ENCODE measurements at regions of chr2 and their contacts with region 1.

Region 1: GRCh38 chr2:217331523-217332139 is 471.8 kb upstream of the TNP1 start:
- DNase-seq: peak; percentile 83
- H3K4me3 Mint-ChIP-seq: peak overlapping the region; percentile 24
- H3K27ac Mint-ChIP-seq: peak overlapping the region; percentile 97
- H3K4me1 Mint-ChIP-seq: peaks cover 84% of the 10 kb centered on the region
- H3K27me3 Mint-ChIP-seq: no peaks in the 10 kb centered on the region
- CTCF ChIP-seq: no peak

Region 2: DNA sequence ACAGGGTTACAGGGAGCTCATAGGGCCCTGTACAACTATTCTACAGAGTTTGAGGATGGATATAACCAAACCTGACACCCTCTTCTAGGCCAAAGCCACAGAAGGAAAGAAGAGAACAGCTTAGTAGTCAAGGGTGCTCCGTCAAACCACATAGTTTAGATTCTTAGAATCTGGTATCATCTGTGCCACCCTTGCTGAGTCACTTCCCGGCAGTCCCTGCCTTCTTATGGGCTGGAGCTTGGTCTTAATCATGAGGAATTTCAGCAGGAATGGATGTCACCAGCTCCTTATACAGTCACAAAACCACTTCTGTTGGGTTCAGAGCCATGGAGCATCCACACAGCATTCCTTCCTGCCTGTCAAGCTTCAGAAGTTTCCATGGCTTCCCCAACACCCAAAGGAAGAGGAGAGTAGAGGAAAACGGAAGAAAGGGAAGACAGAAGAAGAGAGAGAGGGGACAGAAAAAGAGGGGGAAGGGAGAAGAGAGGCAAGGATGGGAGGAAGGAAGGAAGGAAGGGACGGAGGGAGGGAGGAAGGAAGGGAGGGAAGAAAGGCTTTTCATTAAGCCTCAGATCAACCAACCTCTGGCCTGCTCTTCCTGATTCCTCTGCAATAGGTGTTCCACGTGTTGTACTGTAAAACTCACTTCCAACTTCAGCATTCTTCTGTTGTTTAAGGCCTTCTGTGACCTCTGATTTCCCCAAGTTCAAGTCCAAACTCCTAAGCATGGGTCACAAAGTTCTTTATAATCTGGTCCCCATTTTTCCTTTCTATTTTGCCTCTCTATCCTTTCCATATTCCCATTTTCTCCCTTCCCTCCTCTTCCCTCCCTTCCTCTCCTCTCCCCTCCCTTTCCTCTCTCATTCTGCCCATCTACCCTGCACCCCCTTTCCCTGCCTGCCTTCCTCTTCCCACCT is 225.6 kb before region 1 on chr2:
- CTCF ChIA-PET with region 1: interaction called, 5 read pairs
- intact Hi-C with region 1: loop called (anchors 2 kb)
- DNase-seq: peak; percentile 66
- H3K4me3 Mint-ChIP-seq: no peak overlapping the region
- H3K27ac Mint-ChIP-seq: peak overlapping the region; percentile 90
- H3K4me1 Mint-ChIP-seq: peaks cover 65% of the 10 kb centered on the region
- H3K27me3 Mint-ChIP-seq: no peaks in the 10 kb centered on the region
- CTCF ChIP-seq: no peak

Region 3: DNA sequence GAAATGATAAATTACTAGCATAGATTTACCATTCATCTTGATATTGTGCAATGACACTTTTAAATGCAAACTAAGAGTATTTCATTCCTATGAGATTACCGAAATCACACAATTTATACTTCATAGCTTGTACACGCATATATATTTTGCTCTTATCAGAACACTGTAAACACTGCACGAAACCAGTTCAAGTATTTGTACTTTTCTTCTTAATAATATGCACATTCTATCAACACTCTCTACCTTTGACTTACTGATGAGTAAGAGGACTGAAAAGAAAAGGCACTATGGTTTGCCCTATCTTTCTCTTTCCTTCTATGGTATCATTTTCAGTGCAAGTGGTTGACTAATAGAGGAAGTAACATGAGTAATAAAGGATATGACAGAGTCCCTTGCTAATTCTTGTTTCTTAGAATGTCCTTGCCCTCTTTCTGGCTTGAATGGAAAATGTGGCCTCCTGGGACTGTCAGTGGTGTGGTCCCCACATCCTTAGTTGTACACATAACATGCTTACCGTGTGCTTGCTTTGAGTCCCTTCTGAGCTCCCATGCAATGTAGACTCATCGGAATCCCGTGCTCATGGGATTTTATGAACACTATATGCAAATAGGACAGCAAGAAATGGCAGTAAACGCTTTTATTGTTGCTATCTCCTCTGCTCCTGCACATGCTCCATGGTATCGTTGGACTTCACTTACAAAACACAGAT is 108.3 kb before region 1 on chr2:
- CTCF ChIA-PET with region 1: interaction called, 3 read pairs
- intact Hi-C with region 1: loop called (anchors 1 kb)
- DNase-seq: peak; percentile 56
- H3K4me3 Mint-ChIP-seq: no peak overlapping the region
- H3K27ac Mint-ChIP-seq: peak overlapping the region; percentile 86
- H3K4me1 Mint-ChIP-seq: peaks cover 42% of the 10 kb centered on the region
- H3K27me3 Mint-ChIP-seq: no peaks in the 10 kb centered on the region
- CTCF ChIP-seq: no peak

Region 4: DNA sequence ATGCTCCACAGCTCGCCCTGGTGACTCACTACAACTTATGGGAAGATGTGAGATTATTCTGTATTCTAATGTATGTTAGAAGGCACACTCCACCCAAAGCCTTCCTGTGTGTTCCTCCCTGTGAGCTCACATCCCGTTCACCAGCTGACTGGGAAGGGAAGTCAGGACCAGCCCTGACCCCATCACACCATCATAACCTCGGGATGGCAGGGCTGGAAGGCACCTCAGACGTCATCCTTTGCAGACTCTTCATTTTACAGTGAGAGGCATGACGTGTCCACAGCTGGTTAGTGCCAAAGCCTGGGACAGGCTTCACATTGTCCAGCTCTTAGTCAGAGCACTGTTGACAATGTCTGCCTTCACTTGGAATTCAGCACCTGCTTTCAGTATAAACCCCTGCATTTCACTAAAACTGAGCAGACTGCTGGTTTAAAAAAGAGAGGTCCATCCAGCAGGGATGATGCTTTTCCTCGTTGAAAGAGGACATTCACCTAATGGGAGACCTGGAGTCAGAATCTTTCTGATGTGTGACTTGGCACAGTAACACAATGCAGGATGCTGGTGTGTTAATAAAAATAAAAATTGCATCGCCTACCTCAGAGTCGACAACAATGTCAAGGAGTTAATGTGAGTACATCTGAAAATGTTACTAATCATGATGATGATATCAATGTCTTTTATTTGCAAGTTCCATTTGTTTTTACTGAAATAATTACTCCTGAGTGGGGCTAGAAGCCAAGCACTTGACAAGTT is 53.8 kb before region 1 on chr2:
- CTCF ChIA-PET with region 1: no interaction called
- intact Hi-C with region 1: loop called (anchors 5 kb)
- DNase-seq: peak; percentile 59
- H3K4me3 Mint-ChIP-seq: no peak overlapping the region
- H3K27ac Mint-ChIP-seq: peak overlapping the region; percentile 96
- H3K4me1 Mint-ChIP-seq: peaks cover 30% of the 10 kb centered on the region
- H3K27me3 Mint-ChIP-seq: no peaks in the 10 kb centered on the region
- CTCF ChIP-seq: no peak

Region 5: GRCh38 chr2:217510771-217511291 is 179.2 kb after region 1 on chr2:
- CTCF ChIA-PET with region 1: interaction called, 6 read pairs
- intact Hi-C with region 1: loop called (anchors 1 kb)
- DNase-seq: peak; percentile 76
- H3K4me3 Mint-ChIP-seq: no peak overlapping the region
- H3K27ac Mint-ChIP-seq: peak overlapping the region; percentile 90
- H3K4me1 Mint-ChIP-seq: peaks cover 39% of the 10 kb centered on the region
- H3K27me3 Mint-ChIP-seq: no peaks in the 10 kb centered on the region
- CTCF ChIP-seq: peak; percentile 79

Measured in Calu3 (cell line).